Common myeloid progenitor, CD34-positive (primary cell): ENCODE measurements at regions of chr19 and their contacts with region 1.

Region 1: DNA sequence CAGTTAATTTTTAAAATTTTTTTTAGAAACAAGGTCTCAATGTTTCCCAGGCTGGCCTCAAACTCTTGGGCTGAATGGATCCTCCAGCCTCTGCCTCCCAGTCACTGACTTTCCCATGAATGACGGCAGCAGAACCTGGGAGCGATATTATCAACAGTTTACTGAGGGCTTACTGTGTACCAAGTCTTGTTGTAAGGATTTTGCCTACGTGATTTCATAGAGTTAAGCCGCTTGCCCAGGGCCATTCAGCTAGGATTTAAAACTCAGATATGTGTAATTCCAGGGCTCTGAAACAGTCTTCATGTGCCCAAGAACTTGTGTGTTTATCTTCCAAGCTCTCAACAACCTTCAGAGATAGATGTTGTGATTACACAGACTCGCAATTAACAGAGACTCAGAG is 6.0 kb upstream of the KXD1 start:
- DNase-seq: no peak
- H3K4me3 ChIP-seq: no peak overlapping the region
- H3K27ac ChIP-seq: no peak overlapping the region
- H3K4me1 ChIP-seq: no peaks in the 10 kb centered on the region
- H3K27me3 ChIP-seq: no peaks in the 10 kb centered on the region

Region 2: GRCh38 chr19:18503971-18504885 is 47.4 kb before region 1 on chr19:
- CTCF ChIA-PET with region 1: no interaction called
- POLR2A ChIA-PET with region 1: no interaction called
- DNase-seq: no peak
- H3K4me3 ChIP-seq: no peak overlapping the region
- H3K27ac ChIP-seq: no peak overlapping the region
- H3K4me1 ChIP-seq: peaks cover 5 to 88% (median 80%) of the 10 kb centered on the region in 4 experiments
- H3K27me3 ChIP-seq: no peaks in the 10 kb centered on the region

Region 3: DNA sequence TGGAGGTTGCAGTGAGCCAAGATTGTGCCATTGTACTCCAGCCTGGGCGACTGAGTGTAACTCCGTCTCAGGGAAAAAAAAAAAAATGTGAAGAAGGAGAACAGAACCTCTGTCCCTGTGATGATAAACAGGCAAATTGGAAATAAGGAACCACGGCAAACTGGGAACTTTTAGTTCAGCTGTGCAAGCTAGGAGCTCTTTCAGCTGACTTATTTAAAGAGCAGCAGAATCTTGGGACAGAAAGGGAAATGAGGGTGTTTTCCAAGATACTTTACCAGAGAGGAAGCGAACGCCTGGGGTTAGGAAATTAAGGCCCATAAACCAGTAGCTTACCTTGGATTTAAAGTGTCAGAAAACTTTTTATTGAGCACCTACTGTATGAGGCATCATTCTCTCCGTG is 277.1 kb after region 1 on chr19:
- CTCF ChIA-PET with region 1: no interaction called
- POLR2A ChIA-PET with region 1: interaction called, 12 read pairs
- DNase-seq: no peak
- H3K4me3 ChIP-seq: no peak overlapping the region
- H3K27ac ChIP-seq: no peak overlapping the region
- H3K4me1 ChIP-seq: peaks cover 3 to 17% (median 15%) of the 10 kb centered on the region in 4 experiments
- H3K27me3 ChIP-seq: peaks cover 0 to 2% (median 0%) of the 10 kb centered on the region in 5 experiments